ENCODE measurements at regions of chr9 and their contacts with region 1.

Region 1: GRCh38 chr9:1009101-1009707 is 32.7 kb downstream of the DMRT3 start:
- DNase-seq: peak; percentile 9
- H3K4me3 ChIP-seq: no peak overlapping the region
- H3K27ac ChIP-seq: no peak overlapping the region
- H3K4me1 ChIP-seq: peaks cover 0 to 22% (median 3%) of the 10 kb centered on the region in 3 donors
- H3K27me3 ChIP-seq: peaks cover 0 to 26% (median 0%) of the 10 kb centered on the region in 4 donors
- CTCF ChIP-seq: peak; percentile 84 to 97 (median 95)
- POLR2A ChIP-seq: no peak

Region 2: DNA sequence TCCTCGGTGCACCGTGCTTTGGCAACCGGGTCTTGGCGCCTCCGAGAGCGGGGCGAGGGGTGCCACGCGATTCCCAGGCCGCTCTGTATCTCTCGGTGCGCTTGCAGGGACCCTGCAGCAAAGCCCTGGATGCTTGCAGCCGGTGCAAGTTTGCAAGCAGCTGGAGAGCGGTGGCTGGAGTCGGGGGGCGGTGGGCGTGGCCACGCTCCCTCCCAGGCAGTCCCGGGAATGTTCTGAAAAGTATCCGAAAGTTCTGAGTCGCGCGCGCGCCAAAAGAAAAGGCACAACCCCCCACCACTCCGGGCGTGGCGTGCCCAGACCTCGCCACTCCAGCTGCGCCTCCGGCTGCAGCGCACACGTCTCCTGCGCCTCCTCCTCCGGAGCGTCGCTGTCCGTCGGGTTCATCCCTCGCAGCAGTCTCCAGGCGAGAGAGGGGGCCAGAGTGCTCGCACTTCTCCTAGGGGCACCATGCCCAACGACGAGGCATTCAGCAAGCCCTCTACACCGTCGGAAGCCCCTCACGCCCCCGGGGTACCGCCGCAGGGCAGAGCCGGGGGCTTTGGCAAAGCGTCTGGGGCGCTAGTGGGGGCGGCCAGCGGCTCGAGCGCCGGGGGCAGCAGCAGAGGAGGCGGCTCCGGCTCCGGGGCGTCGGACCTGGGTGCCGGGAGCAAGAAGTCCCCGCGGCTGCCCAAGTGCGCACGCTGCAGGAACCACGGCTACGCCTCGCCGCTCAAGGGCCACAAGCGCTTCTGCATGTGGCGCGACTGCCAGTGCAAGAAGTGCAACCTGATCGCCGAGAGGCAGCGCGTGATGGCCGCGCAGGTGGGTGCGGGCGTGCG is 167.6 kb before region 1 on chr9 and contains the start of gene DMRT1:
- intact Hi-C with region 1: no loop called
- DNase-seq: no peak
- H3K4me3 ChIP-seq: peak within 1 kb of the TSS in 2 of 4 donors; percentile 24 to 40
- H3K27ac ChIP-seq: no peak within 1 kb of the TSS
- H3K4me1 ChIP-seq: peaks cover 8 to 24% (median 11%) of the 10 kb centered on the region in 3 donors
- H3K27me3 ChIP-seq: peaks cover 11 to 97% (median 26%) of the 10 kb centered on the region in 4 donors
- CTCF ChIP-seq: no peak
- POLR2A ChIP-seq: no peak
- total RNA-seq, gene DMRT1: not detected

Region 3: GRCh38 chr9:893843-894420 is 115.3 kb before region 1 on chr9:
- intact Hi-C with region 1: loop called (anchors 5 kb)
- DNase-seq: no peak
- H3K4me3 ChIP-seq: peak overlapping the region in 1 of 4 donors; percentile 34
- H3K27ac ChIP-seq: no peak overlapping the region
- H3K4me1 ChIP-seq: peaks cover 4 to 8% (median 6%) of the 10 kb centered on the region in 3 donors
- H3K27me3 ChIP-seq: peaks cover 0 to 7% (median 0%) of the 10 kb centered on the region in 4 donors
- CTCF ChIP-seq: peak; percentile 74 to 93 (median 84)
- POLR2A ChIP-seq: no peak

Region 4: DNA sequence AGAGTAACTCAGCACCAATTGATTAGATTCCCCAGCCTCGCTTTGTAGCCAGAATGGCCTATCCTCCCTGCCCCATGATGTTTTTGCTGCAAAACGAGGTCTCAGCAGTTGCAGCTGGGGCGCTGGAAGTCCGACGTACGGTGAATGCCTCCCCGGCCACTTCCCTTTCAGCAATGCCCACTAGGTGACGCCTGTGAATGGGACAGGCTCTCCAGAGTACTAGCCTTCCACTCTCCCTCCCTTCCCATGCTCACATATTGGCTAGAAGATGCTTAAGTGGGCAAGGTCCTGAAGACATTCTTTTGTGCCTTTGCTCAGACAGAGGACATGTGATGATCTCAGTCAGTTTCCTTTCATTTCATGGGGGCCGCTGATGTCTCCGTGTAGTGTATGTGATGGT is 91.7 kb after region 1 on chr9:
- intact Hi-C with region 1: no loop called
- DNase-seq: no peak
- H3K4me3 ChIP-seq: no peak overlapping the region
- H3K27ac ChIP-seq: no peak overlapping the region
- H3K4me1 ChIP-seq: no peaks in the 10 kb centered on the region
- H3K27me3 ChIP-seq: peaks cover 0 to 17% (median 0%) of the 10 kb centered on the region in 4 donors
- CTCF ChIP-seq: peak in 3 of 6 experiments; percentile 12 to 38 (median 23)
- POLR2A ChIP-seq: no peak